IMR-90 (cell line): ENCODE measurements at regions of chr20 and their contacts with region 1.

Region 1: DNA sequence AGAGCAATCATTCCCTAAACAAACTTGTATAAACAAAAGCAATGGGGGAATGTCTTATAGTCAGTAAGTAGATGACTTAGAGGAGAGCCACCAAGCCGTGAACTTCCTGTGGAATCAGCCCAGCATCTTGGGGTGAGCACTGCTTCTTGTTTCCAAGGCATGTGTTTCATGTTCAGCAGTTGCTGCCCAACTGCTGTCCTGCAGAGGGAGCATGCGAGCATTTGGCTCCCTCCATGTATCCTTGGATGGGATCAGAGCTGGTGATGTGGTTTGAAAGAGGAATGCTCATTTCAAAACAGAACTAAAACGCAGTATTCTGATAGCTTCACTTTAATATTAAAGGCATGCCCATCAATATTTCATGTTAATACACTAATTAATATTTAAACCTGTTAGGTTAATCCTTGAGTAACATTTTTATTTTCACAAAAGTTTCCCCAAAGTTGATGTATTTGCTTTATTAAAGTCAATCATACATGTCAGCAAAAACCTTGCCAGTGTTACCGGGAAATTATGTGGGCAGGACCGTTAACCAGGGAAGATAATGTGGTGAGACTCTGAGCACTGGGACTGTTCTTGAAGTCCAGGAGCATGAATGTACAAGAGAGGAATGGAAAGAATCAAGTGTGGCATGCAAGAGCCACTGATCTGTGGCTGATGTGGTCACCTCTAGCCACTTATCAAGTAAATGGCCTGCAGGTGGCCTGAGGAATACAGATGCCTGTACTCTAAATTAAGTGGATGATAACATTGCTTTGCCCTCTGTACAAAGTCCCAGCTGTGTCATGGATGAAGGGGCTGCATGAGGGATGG is 172.2 kb upstream of the GGTLC1 start:
- DNase-seq: peak; percentile 63
- ATAC-seq: peak; percentile 87
- H3K4me3 ChIP-seq: no peak overlapping the region
- H3K27ac ChIP-seq: no peak overlapping the region
- H3K4me1 ChIP-seq: no peaks in the 10 kb centered on the region
- H3K27me3 ChIP-seq: no peaks in the 10 kb centered on the region
- CTCF ChIP-seq: peak; percentile 77
- POLR2A ChIP-seq: no peak
- RAD21 ChIP-seq: peak; percentile 65

Region 2: DNA sequence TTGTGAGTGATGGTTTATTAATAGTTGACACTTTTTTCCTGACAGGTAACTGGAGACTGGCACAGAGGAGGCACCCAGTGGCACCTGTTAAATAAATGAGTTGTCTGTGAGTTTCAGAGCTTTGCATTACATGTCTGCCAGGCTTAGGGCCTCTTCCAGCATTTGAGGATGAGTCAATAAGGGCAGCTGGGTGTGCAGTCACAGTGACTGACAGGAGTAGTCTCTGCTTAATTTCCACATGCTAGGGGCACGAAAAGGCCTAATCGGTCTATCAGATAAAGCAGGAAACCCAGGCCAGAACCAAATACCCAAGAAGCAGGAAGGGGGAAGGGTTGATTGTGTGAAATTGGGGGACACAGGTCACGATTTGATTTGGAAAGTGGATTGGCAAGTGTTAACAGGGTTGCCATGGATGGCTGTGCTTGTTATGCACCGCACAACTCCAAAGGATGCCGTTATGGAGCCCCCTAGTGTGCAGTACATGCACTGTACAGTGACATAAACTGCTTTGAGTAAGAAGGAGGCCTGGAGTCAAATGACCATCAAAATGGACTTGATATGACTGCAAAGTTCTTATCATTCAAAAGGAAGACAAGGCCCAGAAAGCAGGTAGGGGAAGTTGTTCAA is 60.3 kb before region 1 on chr20:
- CTCF ChIA-PET with region 1: no interaction called
- POLR2A ChIA-PET with region 1: interaction called, 17 read pairs
- dilution Hi-C with region 1: no loop called
- in situ Hi-C with region 1: no loop called
- intact Hi-C with region 1: no loop called
- DNase-seq: peak; percentile 47
- ATAC-seq: peak; percentile 80; the same call in 1 of the 2 replicates
- H3K4me3 ChIP-seq: no peak overlapping the region
- H3K27ac ChIP-seq: no peak overlapping the region
- H3K4me1 ChIP-seq: no peaks in the 10 kb centered on the region
- H3K27me3 ChIP-seq: no peaks in the 10 kb centered on the region; the same call in 1 of the 2 replicates
- CTCF ChIP-seq: peak; percentile 58
- POLR2A ChIP-seq: no peak
- RAD21 ChIP-seq: 0 out of 2 replicates have a peak, but pooled peaks have one; percentile 15

Region 3: GRCh38 chr20:24277196-24277595 is 116.4 kb after region 1 on chr20:
- CTCF ChIA-PET with region 1: no interaction called
- POLR2A ChIA-PET with region 1: no interaction called
- dilution Hi-C with region 1: no loop called
- in situ Hi-C with region 1: no loop called
- intact Hi-C with region 1: no loop called
- DNase-seq: no peak
- ATAC-seq: no peak
- H3K4me3 ChIP-seq: no peak overlapping the region
- H3K27ac ChIP-seq: no peak overlapping the region
- H3K4me1 ChIP-seq: no peaks in the 10 kb centered on the region
- H3K27me3 ChIP-seq: no peaks in the 10 kb centered on the region
- CTCF ChIP-seq: no peak
- POLR2A ChIP-seq: no peak
- RAD21 ChIP-seq: no peak

Region 4: DNA sequence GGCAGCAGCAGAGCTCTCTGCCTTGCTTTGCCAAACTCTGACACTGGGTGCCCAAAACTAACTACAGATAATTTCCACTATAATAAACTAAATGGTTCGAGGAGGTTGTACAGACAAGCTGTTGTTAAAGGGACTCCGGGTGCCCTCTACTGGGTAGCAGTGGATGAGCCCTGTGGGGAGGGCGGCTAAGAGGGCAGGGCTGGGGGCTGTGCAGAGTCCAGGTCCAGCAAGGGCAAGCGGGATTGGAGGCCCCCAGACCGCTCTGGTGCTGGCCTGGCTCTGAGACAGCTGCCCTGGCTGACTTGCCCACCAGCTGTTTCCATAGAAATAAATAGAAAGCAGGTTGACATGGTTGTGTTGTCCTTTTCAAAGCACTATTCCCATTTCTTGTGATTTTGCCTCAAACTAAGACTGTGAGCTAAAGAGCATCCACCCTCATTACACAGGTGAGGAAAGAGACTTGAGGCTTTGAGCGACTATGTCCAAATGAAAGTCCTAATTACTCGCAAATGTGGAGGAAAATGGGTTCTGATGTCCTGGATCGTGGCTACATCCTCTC is 620.7 kb after region 1 on chr20:
- CTCF ChIA-PET with region 1: no interaction called
- POLR2A ChIA-PET with region 1: no interaction called
- dilution Hi-C with region 1: no loop called
- in situ Hi-C with region 1: no loop called
- intact Hi-C with region 1: loop called (anchors 1 kb)
- DNase-seq: peak; percentile 36
- ATAC-seq: peak; percentile 87
- H3K4me3 ChIP-seq: no peak overlapping the region
- H3K27ac ChIP-seq: no peak overlapping the region
- H3K4me1 ChIP-seq: no peaks in the 10 kb centered on the region
- H3K27me3 ChIP-seq: peaks cover 43% of the 10 kb centered on the region
- CTCF ChIP-seq: peak; percentile 58
- POLR2A ChIP-seq: no peak
- RAD21 ChIP-seq: peak; percentile 71

Region 5: DNA sequence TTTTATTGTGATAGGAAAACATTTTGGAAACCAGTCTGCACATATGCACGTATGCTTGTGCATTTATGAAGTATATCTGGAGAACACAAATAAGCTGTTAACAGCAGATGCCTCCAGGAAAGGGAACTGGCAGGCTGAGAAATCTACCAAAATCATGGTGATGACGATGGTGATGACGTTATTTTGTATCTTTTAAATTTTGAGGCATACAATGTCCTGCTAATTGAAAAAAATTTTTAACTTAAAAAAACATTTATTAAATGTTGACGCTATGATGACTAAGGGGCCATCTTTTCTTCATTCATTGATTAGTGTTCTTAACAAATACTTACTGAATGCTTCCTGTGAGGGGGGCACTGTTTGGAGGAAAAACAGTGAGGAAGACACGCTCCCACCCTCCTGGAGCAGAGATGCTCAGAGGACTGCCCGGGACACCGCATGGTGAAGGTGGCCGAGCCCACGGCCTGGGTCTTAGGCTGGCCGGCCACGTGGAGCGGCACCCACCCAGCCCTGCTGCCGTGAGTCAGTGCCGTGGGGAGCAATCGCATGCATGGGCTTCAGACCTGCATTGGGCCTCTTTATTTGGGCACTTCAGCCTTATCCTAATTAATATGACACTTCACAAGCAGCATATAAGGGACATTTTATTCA is 1018.8 kb after region 1 on chr20:
- CTCF ChIA-PET with region 1: no interaction called
- POLR2A ChIA-PET with region 1: no interaction called
- dilution Hi-C with region 1: no loop called
- in situ Hi-C with region 1: no loop called
- intact Hi-C with region 1: no loop called
- DNase-seq: no peak
- ATAC-seq: no peak
- H3K4me3 ChIP-seq: no peak overlapping the region
- H3K27ac ChIP-seq: no peak overlapping the region
- H3K4me1 ChIP-seq: peaks cover 5% of the 10 kb centered on the region
- H3K27me3 ChIP-seq: peaks cover 9% of the 10 kb centered on the region
- CTCF ChIP-seq: no peak
- POLR2A ChIP-seq: no peak
- RAD21 ChIP-seq: no peak